Heart right ventricle (tissue), 16 donors: ENCODE measurements at regions of chr19 and their contacts with region 1.

Region 1: DNA sequence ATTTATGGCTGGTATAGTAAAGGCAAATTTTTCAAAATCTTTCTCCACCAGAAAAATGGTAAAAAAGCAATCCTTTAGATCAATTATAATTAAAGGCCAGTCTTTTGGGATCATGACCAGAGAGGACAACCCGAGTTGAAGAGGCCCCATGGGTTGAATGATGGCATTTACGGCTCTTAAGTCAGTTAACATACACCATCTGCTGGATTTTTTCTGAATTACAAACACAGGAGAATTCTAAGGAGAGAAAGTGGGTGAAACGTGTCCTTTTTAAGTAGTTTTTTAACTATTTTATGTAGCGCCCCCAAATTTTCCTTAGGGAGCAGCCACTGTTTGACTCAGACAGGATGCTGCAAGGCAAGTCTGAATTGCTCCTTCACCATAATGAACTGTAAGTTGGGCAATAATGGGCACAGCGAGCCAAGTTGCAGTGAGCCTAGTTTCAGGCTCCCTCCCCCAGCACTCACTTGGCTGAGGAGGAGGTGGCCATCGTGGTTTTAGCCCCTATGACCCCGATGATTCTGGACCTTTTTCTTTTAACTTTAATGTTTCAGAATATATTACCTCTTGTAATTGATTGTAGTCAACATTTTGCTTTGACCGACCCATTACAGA is 13.6 kb upstream of the ZNF611 start:
- DNase-seq: peak in 1 of 2 donors; percentile 8
- ATAC-seq: peak in 2 of 8 donors; percentile 46 to 60
- H3K4me3 ChIP-seq: no peak overlapping the region
- H3K27ac ChIP-seq: no peak overlapping the region
- H3K4me1 ChIP-seq: peaks cover 0 to 4% (median 0%) of the 10 kb centered on the region in 9 donors
- H3K27me3 ChIP-seq: no peaks in the 10 kb centered on the region
- CTCF ChIP-seq: peak; percentile 15 to 63 (median 46)

Region 2: DNA sequence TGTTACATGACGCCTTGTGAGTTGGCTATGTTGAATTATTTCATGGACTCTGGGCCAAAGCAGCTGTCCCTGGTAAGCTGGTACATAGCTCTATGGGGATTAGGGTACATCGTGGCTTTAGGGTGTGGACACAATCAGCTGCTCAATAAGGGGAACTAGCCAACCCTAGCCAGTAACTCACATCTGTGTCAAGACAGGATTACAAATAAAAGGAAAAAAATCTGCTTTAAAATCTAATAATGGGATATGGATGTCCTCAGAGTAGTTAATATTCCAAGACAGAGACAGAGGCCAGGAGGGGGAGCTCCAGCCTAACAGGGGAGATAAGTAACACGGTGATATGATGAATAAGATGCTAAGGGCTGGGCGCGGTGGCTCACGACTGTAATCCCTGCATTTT is 500.2 kb before region 1 on chr19:
- intact Hi-C with region 1: loop called in 4 of 10 experiments (anchors 1 to 10 kb)
- DNase-seq: peak; percentile 31 to 38
- ATAC-seq: peak in 5 of 8 donors; percentile 49 to 77 (median 67)
- H3K4me3 ChIP-seq: no peak overlapping the region
- H3K27ac ChIP-seq: no peak overlapping the region
- H3K4me1 ChIP-seq: no peaks in the 10 kb centered on the region
- H3K27me3 ChIP-seq: no peaks in the 10 kb centered on the region
- CTCF ChIP-seq: peak in 8 of 9 donors; percentile 20 to 60 (median 56)

Region 3: GRCh38 chr19:52343548-52343947 is 404.9 kb before region 1 on chr19:
- intact Hi-C with region 1: loop called in 3 of 10 experiments (anchors 5 to 10 kb)
- DNase-seq: peak; percentile 19 to 64
- ATAC-seq: peak; percentile 38 to 77 (median 67)
- H3K4me3 ChIP-seq: no peak overlapping the region
- H3K27ac ChIP-seq: no peak overlapping the region
- H3K4me1 ChIP-seq: peaks cover 0 to 7% (median 3%) of the 10 kb centered on the region in 9 donors
- H3K27me3 ChIP-seq: no peaks in the 10 kb centered on the region
- CTCF ChIP-seq: peak; percentile 35 to 78 (median 69)

Region 4: GRCh38 chr19:52601025-52601973 is 147.1 kb before region 1 on chr19:
- intact Hi-C with region 1: loop called in 1 of 10 experiments (anchors 10 kb)
- DNase-seq: peak; percentile 94 to 96
- ATAC-seq: peak; percentile 97 to 99 (median 99)
- H3K4me3 ChIP-seq: peak overlapping the region; percentile 57 to 82 (median 65)
- H3K27ac ChIP-seq: peak overlapping the region; percentile 9 to 84 (median 67)
- H3K4me1 ChIP-seq: peaks cover 5 to 18% (median 12%) of the 10 kb centered on the region in 9 donors
- H3K27me3 ChIP-seq: no peaks in the 10 kb centered on the region
- CTCF ChIP-seq: peak; percentile 9 to 68 (median 52)